CD8-positive, alpha-beta T cell (primary cell): ENCODE measurements at regions of chr2 and their contacts with region 1.

Region 1: GRCh38 chr2:174603280-174603679 is 5.7 kb upstream of the WIPF1 start:
- DNase-seq: peak in 6 of 9 experiments; percentile 31 to 86 (median 64)
- ATAC-seq: peak; percentile 67
- H3K4me3 ChIP-seq: no peak overlapping the region
- H3K4me3 Mint-ChIP-seq: no peak overlapping the region
- H3K27ac ChIP-seq: peak overlapping the region in 1 of 2 experiments; percentile 11
- H3K27ac Mint-ChIP-seq: peak overlapping the region; percentile 85
- H3K4me1 ChIP-seq: peaks cover 76% of the 10 kb centered on the region
- H3K4me1 Mint-ChIP-seq: peaks cover 86% of the 10 kb centered on the region
- H3K27me3 ChIP-seq: no peaks in the 10 kb centered on the region
- H3K27me3 Mint-ChIP-seq: no peaks in the 10 kb centered on the region
- CTCF ChIP-seq: peak; percentile 65

Region 2: GRCh38 chr2:174568425-174568824 is 34.9 kb before region 1 on chr2:
- CTCF ChIA-PET with region 1: interaction called, 289 read pairs
- POLR2A ChIA-PET with region 1: interaction called, 3 read pairs
- intact Hi-C with region 1: loop called in 1 of 2 experiments (anchors 5 kb)
- DNase-seq: no peak
- ATAC-seq: no peak
- H3K4me3 ChIP-seq: no peak overlapping the region
- H3K4me3 Mint-ChIP-seq: no peak overlapping the region
- H3K27ac ChIP-seq: no peak overlapping the region
- H3K27ac Mint-ChIP-seq: peak overlapping the region; percentile 34
- H3K4me1 ChIP-seq: peaks cover 22% of the 10 kb centered on the region
- H3K4me1 Mint-ChIP-seq: peaks cover 45% of the 10 kb centered on the region
- H3K27me3 ChIP-seq: no peaks in the 10 kb centered on the region
- H3K27me3 Mint-ChIP-seq: no peaks in the 10 kb centered on the region
- CTCF ChIP-seq: no peak

Region 3: GRCh38 chr2:174615871-174616436 is 12.7 kb after region 1 on chr2:
- CTCF ChIA-PET with region 1: interaction called, 36 read pairs
- POLR2A ChIA-PET with region 1: interaction called, 7 read pairs
- intact Hi-C with region 1: no loop called
- DNase-seq: peak in 1 of 9 experiments; percentile 52
- ATAC-seq: peak; percentile 69
- H3K4me3 ChIP-seq: no peak overlapping the region
- H3K4me3 Mint-ChIP-seq: peak overlapping the region; percentile 12
- H3K27ac ChIP-seq: peak overlapping the region in 1 of 2 experiments; percentile 60
- H3K27ac Mint-ChIP-seq: peak overlapping the region; percentile 58
- H3K4me1 ChIP-seq: peaks cover 62% of the 10 kb centered on the region
- H3K4me1 Mint-ChIP-seq: peaks cover 83% of the 10 kb centered on the region
- H3K27me3 ChIP-seq: no peaks in the 10 kb centered on the region
- H3K27me3 Mint-ChIP-seq: no peaks in the 10 kb centered on the region
- CTCF ChIP-seq: no peak

Region 4: DNA sequence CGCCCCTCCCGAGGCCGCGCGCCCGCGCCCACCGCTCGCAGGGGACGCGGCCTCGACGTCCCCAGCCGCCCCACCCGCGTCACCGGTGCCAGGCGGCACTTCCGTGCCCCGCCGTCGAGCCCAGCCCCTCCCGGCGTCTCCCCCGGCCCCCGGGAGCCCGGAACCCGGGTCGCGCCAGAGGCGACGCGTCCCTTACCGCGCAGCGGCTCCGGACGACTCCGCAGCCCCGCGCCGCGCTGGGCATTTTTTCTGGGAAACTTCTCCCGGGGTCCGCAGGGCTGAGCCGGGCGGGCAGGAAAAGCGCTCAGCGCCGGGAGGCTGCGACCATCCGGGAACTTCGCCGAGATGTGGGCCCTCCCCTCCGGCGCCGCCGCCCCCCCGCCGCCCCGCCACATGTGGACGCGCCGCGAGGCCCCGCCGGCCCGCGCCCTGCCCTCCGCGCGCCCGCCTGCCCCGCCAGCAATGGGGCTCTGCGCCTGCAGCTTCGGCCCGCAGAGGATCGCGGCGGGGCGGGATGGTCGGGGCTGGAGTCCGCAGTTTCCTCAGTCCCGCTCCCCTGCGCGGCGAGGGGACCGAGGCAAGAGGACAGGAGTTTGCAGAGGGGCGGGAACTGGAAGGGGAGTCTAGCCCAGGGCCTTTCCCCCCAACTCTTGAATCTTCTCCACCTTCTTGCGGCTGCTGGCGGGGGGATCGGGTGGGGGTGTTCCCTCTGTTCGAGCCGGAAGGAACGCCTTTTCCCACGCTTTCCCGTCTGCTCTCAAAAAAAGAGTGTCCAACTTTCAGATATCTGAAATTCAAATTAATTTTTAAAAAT is 79.5 kb after region 1 on chr2:
- CTCF ChIA-PET with region 1: interaction called, 86 read pairs
- POLR2A ChIA-PET with region 1: interaction called, 10 read pairs
- intact Hi-C with region 1: loop called (anchors 2 kb)
- DNase-seq: peak; percentile 33 to 83 (median 67)
- ATAC-seq: peak; percentile 74
- H3K4me3 ChIP-seq: peak overlapping the region; percentile 73 to 81
- H3K4me3 Mint-ChIP-seq: peak overlapping the region; percentile 91
- H3K27ac ChIP-seq: peak overlapping the region; percentile 41 to 70
- H3K27ac Mint-ChIP-seq: peak overlapping the region; percentile 93
- H3K4me1 ChIP-seq: peaks cover 35% of the 10 kb centered on the region
- H3K4me1 Mint-ChIP-seq: peaks cover 55% of the 10 kb centered on the region
- H3K27me3 ChIP-seq: no peaks in the 10 kb centered on the region
- H3K27me3 Mint-ChIP-seq: no peaks in the 10 kb centered on the region
- CTCF ChIP-seq: no peak